ENCODE measurements at regions of chr9 and their contacts with region 1.

Region 1: GRCh38 chr9:20941174-20941690 is 90.2 kb downstream of the HACD4 start:
- DNase-seq: peak; percentile 6 to 65 (median 49)
- H3K4me3 ChIP-seq: no peak overlapping the region
- H3K4me3 Mint-ChIP-seq: peak overlapping the region in 1 of 7 donors; percentile 2
- H3K27ac ChIP-seq: no peak overlapping the region
- H3K27ac Mint-ChIP-seq: peak overlapping the region in 1 of 8 donors; percentile 3
- H3K4me1 ChIP-seq: no peaks in the 10 kb centered on the region
- H3K4me1 Mint-ChIP-seq: peaks cover 0 to 5% (median 4%) of the 10 kb centered on the region in 3 donors
- H3K27me3 ChIP-seq: no peaks in the 10 kb centered on the region
- H3K27me3 Mint-ChIP-seq: no peaks in the 10 kb centered on the region

Region 2: DNA sequence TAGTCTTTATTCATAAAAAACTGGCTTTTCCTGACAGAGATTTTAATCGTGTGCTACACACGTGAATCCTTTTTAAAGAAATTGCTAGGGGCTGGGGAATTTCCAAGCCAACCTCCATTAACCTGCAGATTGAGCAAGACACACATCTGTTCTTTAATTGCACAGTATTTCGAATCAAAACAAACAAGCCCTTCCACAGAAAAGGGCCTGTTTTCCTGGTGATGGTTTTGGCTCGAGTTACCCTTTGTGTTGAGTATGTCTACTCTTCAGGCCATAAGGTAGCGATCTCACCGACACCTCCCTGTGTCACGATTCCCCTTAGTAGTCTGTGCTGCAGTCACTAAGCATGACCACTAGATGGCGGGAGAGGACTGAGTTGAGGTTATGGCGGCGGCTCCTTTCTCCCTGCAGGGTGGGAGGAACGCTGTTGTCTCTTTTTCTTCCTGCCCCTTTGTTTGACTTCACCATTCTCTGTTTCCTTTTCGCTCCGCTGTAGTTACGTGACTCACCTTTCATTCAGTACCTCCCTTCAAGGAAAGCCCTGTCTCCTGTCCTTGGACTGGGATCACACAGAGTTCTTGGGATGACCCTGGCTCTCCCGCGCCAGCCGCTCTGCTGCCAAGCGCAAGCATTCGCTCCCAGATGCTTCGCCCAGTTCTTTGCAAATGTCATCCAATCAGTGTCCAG is 1015.3 kb before region 1 on chr9:
- CTCF ChIA-PET with region 1: interaction called, 21 read pairs
- POLR2A ChIA-PET with region 1: no interaction called
- DNase-seq: peak; percentile 53 to 82 (median 73)
- H3K4me3 ChIP-seq: peak overlapping the region; percentile 19
- H3K4me3 Mint-ChIP-seq: peak overlapping the region in 6 of 7 donors; percentile 57 to 76 (median 72)
- H3K27ac ChIP-seq: no peak overlapping the region
- H3K27ac Mint-ChIP-seq: peak overlapping the region in 1 of 8 donors; percentile 83
- H3K4me1 ChIP-seq: peaks cover 4% of the 10 kb centered on the region
- H3K4me1 Mint-ChIP-seq: peaks cover 6 to 9% (median 8%) of the 10 kb centered on the region in 3 donors
- H3K27me3 ChIP-seq: no peaks in the 10 kb centered on the region
- H3K27me3 Mint-ChIP-seq: peaks cover 5 to 10% of the 10 kb centered on the region in 2 donors

Measured in CD8-positive, alpha-beta memory T cell (primary cell).